ENCODE measurements at regions of chr7 and their contacts with region 1.

Region 1: GRCh38 chr7:135170274-135170997 is at the start of gene CYREN:
- DNase-seq: peak; percentile 92
- ATAC-seq: peak; percentile 82
- H3K4me3 Mint-ChIP-seq: peak within 1 kb of the TSS; percentile 94
- H3K27ac Mint-ChIP-seq: peak within 1 kb of the TSS; percentile 94
- H3K4me1 Mint-ChIP-seq: peaks cover 50% of the 10 kb centered on the region
- H3K27me3 Mint-ChIP-seq: no peaks in the 10 kb centered on the region
- total RNA-seq, gene CYREN: 35.2 to 36.9 TPM

Region 2: GRCh38 chr7:134992626-134993179 is 177.7 kb before region 1 on chr7:
- CTCF ChIA-PET with region 1: interaction called, 66 read pairs
- POLR2A ChIA-PET with region 1: interaction called, 7 read pairs
- DNase-seq: peak; percentile 31
- ATAC-seq: peak; percentile 35
- H3K4me3 Mint-ChIP-seq: no peak overlapping the region
- H3K27ac Mint-ChIP-seq: peak overlapping the region; percentile 65
- H3K4me1 Mint-ChIP-seq: peaks cover 64% of the 10 kb centered on the region
- H3K27me3 Mint-ChIP-seq: no peaks in the 10 kb centered on the region

Region 3: GRCh38 chr7:135147899-135148721 is 22.3 kb before region 1 on chr7 and contains the start of gene TMEM140:
- CTCF ChIA-PET with region 1: interaction called, 98 read pairs
- POLR2A ChIA-PET with region 1: interaction called, 61 read pairs
- DNase-seq: peak; percentile 77
- ATAC-seq: peak; percentile 84
- H3K4me3 Mint-ChIP-seq: peak within 1 kb of the TSS; percentile 84
- H3K27ac Mint-ChIP-seq: peak within 1 kb of the TSS; percentile 95
- H3K4me1 Mint-ChIP-seq: peaks cover 53% of the 10 kb centered on the region
- H3K27me3 Mint-ChIP-seq: no peaks in the 10 kb centered on the region
- total RNA-seq, gene TMEM140: 12.6 to 12.7 TPM

Region 4: DNA sequence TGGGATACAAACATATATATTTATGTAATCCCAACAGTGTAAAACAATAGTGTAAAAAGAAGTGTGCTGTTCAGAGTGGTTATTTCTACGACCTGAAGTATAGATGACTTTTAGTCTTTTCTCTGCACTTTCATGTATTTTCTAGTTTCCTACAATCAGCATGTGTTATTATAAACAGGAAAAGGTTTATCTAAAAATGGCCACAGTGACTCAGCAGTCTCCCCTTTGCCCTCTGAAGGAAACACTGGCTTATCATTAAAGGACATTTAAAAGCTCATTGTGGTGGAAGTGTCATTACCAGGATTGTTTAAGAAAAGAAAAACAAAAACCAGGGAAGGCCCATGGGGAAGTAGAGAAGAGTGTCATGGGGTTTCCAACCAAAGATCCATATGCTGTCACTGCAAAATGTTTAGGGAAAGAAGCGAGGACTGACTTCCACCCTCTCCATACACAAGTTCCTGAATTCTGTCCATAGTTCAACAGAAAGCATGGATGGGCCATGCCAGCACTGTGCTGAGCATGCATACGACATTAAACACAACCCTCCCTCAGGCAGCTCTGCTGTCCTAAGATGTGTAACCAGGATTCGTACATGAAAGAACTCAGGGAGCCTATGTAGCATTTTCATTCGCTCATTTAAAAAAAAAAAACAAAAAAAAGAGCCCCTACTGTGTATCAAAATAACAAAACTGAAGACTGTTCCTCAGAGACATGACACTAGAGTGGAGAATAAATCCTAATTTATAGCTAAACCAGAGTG is 10.2 kb before region 1 on chr7:
- CTCF ChIA-PET with region 1: interaction called, 45 read pairs
- POLR2A ChIA-PET with region 1: interaction called, 10 read pairs
- DNase-seq: no peak
- ATAC-seq: peak; percentile 18
- H3K4me3 Mint-ChIP-seq: no peak overlapping the region
- H3K27ac Mint-ChIP-seq: peak overlapping the region; percentile 53
- H3K4me1 Mint-ChIP-seq: peaks cover 29% of the 10 kb centered on the region
- H3K27me3 Mint-ChIP-seq: no peaks in the 10 kb centered on the region

Region 5: DNA sequence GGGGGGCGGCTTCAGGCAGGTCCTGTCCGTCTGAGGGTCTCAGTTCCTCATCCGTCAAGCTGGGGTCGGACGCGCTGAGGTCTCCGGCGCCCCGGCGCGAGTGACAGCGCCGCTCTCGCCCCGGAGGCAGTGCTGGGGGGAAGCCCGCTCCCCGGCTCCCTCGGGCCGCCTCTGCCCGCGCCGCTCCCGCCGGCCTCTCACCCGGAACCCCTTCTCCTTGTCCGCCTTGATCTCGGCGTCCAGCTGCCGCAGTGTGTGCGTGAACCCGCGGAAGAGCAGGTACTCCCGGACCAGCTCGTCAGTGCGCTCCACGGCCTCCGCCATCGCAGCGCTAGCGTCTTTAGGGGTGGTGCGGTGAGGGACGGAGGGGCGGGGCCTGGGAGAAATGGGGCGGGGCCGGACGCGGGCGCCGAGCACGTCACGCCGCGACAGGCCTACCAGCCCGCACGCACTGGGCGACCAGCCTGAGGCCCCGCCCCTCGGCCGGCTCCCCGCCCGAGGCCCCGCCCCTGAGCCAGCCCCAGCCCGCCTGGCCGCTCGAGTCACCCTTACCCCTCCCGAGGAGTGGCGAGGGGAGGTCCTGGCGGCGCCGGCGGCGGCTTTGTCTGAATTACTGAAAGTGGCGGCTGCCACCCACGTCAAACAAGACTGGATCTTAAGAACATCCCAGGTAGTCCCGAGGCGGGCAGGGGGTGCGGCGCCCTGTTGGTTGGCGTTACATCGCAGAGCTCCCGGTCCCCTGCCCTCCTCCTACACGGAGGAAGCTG is 40.9 kb after region 1 on chr7 and contains the start of gene WDR91:
- CTCF ChIA-PET with region 1: interaction called, 19 read pairs
- POLR2A ChIA-PET with region 1: interaction called, 5 read pairs
- DNase-seq: peak; percentile 96
- ATAC-seq: peak; percentile 92
- H3K4me3 Mint-ChIP-seq: peak within 1 kb of the TSS; percentile 94
- H3K27ac Mint-ChIP-seq: peak within 1 kb of the TSS; percentile 99
- H3K4me1 Mint-ChIP-seq: peaks cover 18% of the 10 kb centered on the region
- H3K27me3 Mint-ChIP-seq: peaks cover 3% of the 10 kb centered on the region
- total RNA-seq, gene WDR91: 10.0 to 11.5 TPM

Region 6: GRCh38 chr7:135238112-135238744 is 67.8 kb after region 1 on chr7:
- CTCF ChIA-PET with region 1: no interaction called
- POLR2A ChIA-PET with region 1: no interaction called
- DNase-seq: no peak
- ATAC-seq: no peak
- H3K4me3 Mint-ChIP-seq: no peak overlapping the region
- H3K27ac Mint-ChIP-seq: no peak overlapping the region
- H3K4me1 Mint-ChIP-seq: peaks cover 9% of the 10 kb centered on the region
- H3K27me3 Mint-ChIP-seq: peaks cover 2% of the 10 kb centered on the region

Measured in activated CD8-positive, alpha-beta T cell treated with anti-CD3 and anti-CD28 coated beads, Interleukin-2, amount 10 ng/mL, durations not matched to agents 7 days and 5 days (primary cell).